ENCODE measurements at regions of chr9 and their contacts with region 1.

Region 1: DNA sequence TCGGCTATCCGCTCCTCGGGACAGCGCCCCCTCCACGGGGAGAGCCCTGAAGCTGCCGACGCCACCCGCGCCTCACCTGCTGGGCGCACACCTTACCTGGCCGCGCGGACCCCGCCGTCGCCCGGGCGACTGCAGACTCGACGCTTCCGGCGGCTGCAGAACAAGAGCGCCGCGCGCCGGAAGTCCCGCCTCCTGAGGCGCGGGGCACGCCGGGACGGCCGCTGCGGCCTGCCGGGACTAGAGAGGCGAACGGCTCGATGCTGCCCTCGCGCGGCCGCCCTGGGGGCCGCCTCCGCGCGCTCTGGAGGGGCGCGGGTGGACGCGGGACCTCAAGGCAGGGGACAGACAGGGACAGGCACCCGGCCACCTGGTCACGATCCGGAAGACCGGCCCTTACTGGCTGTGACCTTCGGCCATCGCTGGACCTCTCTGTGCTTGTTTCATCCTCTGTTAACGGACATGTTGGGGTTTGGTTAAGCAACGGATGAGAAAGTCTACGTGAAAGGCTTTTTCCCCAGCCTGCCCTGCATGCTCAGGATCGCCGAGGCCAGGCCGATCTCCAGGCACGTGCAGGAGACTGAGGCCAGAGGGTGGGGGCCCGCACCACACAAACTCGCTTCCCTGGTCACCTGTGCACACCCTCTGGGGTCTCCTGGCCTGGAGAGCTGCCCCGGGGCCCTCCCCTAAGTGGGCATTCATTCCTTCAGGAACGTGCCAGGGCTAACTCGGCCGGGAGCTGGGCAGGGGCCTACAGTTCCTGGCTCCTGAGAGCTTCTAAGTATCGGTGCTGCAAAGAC is at the start of gene SNAPC4:
- DNase-seq: peak; percentile 76 to 93 (median 84)
- ATAC-seq: peak; percentile 68 to 74
- H3K4me3 Mint-ChIP-seq: peak within 1 kb of the TSS; percentile 75 to 91 (median 82)
- H3K27ac Mint-ChIP-seq: peak within 1 kb of the TSS in 9 of 10 donors; percentile 27 to 89 (median 73)
- H3K4me1 Mint-ChIP-seq: peaks cover 27 to 58% (median 45%) of the 10 kb centered on the region in 4 donors
- H3K27me3 Mint-ChIP-seq: no peaks in the 10 kb centered on the region
- polyA plus RNA-seq, gene SNAPC4: 0.90 to 2.0 (median 1.3) TPM

Region 2: GRCh38 chr9:136363606-136364370 is 36.4 kb before region 1 on chr9 and contains the start of gene DNLZ:
- POLR2A ChIA-PET with region 1: interaction called, 34 read pairs
- DNase-seq: peak; percentile 72 to 90 (median 86)
- ATAC-seq: peak; percentile 81
- H3K4me3 Mint-ChIP-seq: peak within 1 kb of the TSS; percentile 70 to 90 (median 81)
- H3K27ac Mint-ChIP-seq: peak within 1 kb of the TSS in 9 of 10 donors; percentile 40 to 93 (median 88)
- H3K4me1 Mint-ChIP-seq: peaks cover 0 to 6% (median 3%) of the 10 kb centered on the region in 4 donors
- H3K27me3 Mint-ChIP-seq: no peaks in the 10 kb centered on the region
- polyA plus RNA-seq, gene DNLZ: 51.6 to 58.1 (median 52.9) TPM

Region 3: GRCh38 chr9:136378170-136379002 is 21.9 kb before region 1 on chr9:
- POLR2A ChIA-PET with region 1: no interaction called
- DNase-seq: no peak
- ATAC-seq: no peak
- H3K4me3 Mint-ChIP-seq: no peak overlapping the region
- H3K27ac Mint-ChIP-seq: peak overlapping the region in 1 of 10 donors; percentile 37
- H3K4me1 Mint-ChIP-seq: no peaks in the 10 kb centered on the region
- H3K27me3 Mint-ChIP-seq: no peaks in the 10 kb centered on the region

Region 4: DNA sequence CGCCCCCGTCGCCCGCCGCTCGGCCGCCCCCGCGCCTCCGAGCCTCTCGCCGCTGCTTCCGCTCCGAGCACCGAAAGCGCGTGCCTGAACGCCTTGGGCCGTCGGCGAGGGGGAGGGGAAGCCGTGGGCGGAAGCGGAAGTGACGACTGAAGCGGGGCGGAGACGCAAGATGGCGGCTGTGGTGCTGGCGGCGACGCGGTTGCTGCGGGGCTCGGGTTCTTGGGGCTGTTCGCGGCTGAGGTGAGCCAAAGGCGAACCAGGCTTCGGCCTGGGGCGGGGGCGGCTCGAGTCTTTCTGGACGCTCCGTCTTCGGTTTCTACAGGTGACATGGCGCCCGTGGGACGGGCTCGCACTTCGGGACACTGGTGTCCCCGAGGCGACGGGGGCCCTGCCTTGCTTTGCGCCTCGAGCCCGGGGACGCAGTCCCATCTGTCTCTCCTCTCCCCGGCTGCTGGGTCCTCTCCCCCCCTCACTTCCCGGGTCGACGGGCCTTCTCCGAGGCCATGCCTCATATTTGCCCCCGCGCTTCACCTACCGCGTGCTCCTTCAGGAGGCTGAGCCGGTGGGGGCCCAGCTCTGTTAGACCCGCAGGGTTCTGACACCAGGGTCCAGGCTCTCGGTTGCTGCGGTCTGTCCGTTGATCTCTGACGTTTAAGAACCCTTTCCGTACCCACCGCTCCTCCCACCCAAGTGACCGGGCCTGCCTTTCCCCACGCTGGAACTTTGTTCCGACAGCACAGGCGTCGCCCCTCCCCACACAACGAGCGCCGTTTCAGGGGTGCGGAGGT is 10.5 kb after region 1 on chr9 and contains the starts of genes ENTR1 and PMPCA:
- POLR2A ChIA-PET with region 1: interaction called, 25 read pairs
- DNase-seq: peak; percentile 91 to 97 (median 94)
- ATAC-seq: peak; percentile 83 to 92
- H3K4me3 Mint-ChIP-seq: peak within 1 kb of the TSS; percentile 86 to 92 (median 89)
- H3K27ac Mint-ChIP-seq: peak within 1 kb of the TSS; percentile 83 to 96 (median 94)
- H3K4me1 Mint-ChIP-seq: peaks cover 16 to 60% (median 40%) of the 10 kb centered on the region in 4 donors
- H3K27me3 Mint-ChIP-seq: no peaks in the 10 kb centered on the region
- polyA plus RNA-seq, gene ENTR1: 9.7 to 16.8 (median 11.4) TPM
- polyA plus RNA-seq, gene PMPCA: 37.0 to 47.0 (median 42.1) TPM

Region 5: GRCh38 chr9:136599811-136600660 is 199.8 kb after region 1 on chr9:
- POLR2A ChIA-PET with region 1: no interaction called
- DNase-seq: no peak
- ATAC-seq: no peak
- H3K4me3 Mint-ChIP-seq: no peak overlapping the region
- H3K27ac Mint-ChIP-seq: no peak overlapping the region
- H3K4me1 Mint-ChIP-seq: peaks cover 2 to 12% (median 6%) of the 10 kb centered on the region in 4 donors
- H3K27me3 Mint-ChIP-seq: peaks cover 0 to 29% (median 9%) of the 10 kb centered on the region in 5 donors